WTC11 (cell line): ENCODE measurements at regions of chrX and their contacts with region 1.

Region 1: DNA sequence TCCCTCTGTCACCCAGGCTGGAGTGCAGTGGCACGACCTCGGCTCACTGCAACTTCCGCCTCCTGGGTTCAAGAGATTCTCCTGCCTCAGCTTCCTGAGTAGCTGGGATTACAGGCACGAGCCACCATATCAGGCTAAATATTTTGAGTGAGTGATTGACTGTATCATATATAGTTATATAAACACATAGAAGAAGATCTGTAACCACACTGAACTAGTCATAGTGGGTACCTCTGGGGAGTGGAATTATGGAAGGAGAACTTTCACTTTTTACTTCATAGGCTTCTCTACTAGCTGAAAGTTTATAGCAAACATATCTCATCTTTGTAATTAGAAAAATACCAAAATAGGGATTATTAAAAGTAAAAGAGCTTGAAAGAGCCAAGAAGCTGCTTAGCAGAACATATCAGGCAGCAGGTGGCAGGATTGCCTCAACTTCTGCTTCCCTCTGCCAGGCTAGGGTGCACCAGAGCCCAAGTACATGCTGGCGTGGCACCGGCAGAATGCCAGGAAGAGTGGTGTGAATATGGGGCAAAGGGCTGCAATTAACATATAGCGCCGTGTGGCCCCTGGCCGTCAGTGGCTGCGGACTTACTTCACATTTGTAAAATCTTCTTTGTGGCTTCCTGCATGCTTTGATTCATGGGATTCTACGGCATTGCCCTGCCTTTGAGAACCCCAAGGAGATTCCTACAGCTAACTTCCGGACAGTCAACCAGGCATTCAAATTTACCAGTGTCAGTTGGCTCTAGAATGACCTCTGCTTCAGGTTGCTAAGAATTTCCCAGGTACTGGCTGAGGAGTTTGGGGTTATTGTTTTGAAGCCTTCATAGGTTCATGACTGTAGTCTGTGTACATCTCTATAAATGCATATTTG is 39.4 kb upstream of the CD40LG start:
- DNase-seq: peak; percentile 42
- ATAC-seq: peak; percentile 52
- H3K4me3 Mint-ChIP-seq: no peak overlapping the region
- H3K27ac Mint-ChIP-seq: no peak overlapping the region
- H3K4me1 Mint-ChIP-seq: no peaks in the 10 kb centered on the region
- H3K27me3 Mint-ChIP-seq: no peaks in the 10 kb centered on the region; the same call in 1 of the 2 replicates
- CTCF ChIP-seq: no peak

Region 2: GRCh38 chrX:136353519-136354095 is 254.9 kb before region 1 on chrX:
- CTCF ChIA-PET with region 1: no interaction called
- POLR2A ChIA-PET with region 1: no interaction called
- DNase-seq: no peak
- ATAC-seq: no peak
- H3K4me3 Mint-ChIP-seq: no peak overlapping the region
- H3K27ac Mint-ChIP-seq: no peak overlapping the region
- H3K4me1 Mint-ChIP-seq: no peaks in the 10 kb centered on the region
- H3K27me3 Mint-ChIP-seq: no peaks in the 10 kb centered on the region
- CTCF ChIP-seq: no peak

Region 3: DNA sequence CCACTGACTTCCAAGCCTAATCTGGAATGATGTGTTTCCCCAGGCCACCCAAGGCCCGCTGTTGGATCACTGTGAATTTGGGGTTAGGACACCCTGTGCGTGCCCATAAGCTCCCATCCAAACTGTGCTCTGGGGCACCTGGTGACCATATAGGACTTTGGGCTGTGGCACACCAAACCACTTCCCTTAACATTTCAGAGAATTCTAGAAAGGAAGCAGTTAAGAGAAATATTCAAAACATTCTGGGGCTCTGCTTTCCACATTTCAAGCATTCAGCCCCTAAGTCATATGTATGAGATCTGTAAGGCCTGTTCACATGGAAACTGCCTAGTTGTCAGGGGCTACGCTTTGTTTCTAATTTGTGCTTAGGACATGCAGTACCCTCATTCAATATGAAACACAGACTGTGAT is 62.2 kb before region 1 on chrX:
- CTCF ChIA-PET with region 1: no interaction called
- POLR2A ChIA-PET with region 1: no interaction called
- DNase-seq: no peak
- ATAC-seq: no peak
- H3K4me3 Mint-ChIP-seq: no peak overlapping the region
- H3K27ac Mint-ChIP-seq: no peak overlapping the region
- H3K4me1 Mint-ChIP-seq: no peaks in the 10 kb centered on the region
- H3K27me3 Mint-ChIP-seq: no peaks in the 10 kb centered on the region
- CTCF ChIP-seq: no peak

Region 4: GRCh38 chrX:136588041-136588788 is 20.3 kb before region 1 on chrX:
- CTCF ChIA-PET with region 1: no interaction called
- POLR2A ChIA-PET with region 1: no interaction called
- DNase-seq: no peak
- ATAC-seq: no peak
- H3K4me3 Mint-ChIP-seq: no peak overlapping the region
- H3K27ac Mint-ChIP-seq: no peak overlapping the region
- H3K4me1 Mint-ChIP-seq: peaks cover 20% of the 10 kb centered on the region
- H3K27me3 Mint-ChIP-seq: no peaks in the 10 kb centered on the region
- CTCF ChIP-seq: no peak

Region 5: GRCh38 chrX:136694431-136695087 is 86.0 kb after region 1 on chrX:
- CTCF ChIA-PET with region 1: interaction called, 55 read pairs
- POLR2A ChIA-PET with region 1: no interaction called
- DNase-seq: no peak
- ATAC-seq: peak; percentile 77
- H3K4me3 Mint-ChIP-seq: no peak overlapping the region
- H3K27ac Mint-ChIP-seq: peak overlapping the region; percentile 91
- H3K4me1 Mint-ChIP-seq: peaks cover 8% of the 10 kb centered on the region
- H3K27me3 Mint-ChIP-seq: no peaks in the 10 kb centered on the region
- CTCF ChIP-seq: peak; percentile 47; the same call in 1 of the 2 replicates

Region 6: DNA sequence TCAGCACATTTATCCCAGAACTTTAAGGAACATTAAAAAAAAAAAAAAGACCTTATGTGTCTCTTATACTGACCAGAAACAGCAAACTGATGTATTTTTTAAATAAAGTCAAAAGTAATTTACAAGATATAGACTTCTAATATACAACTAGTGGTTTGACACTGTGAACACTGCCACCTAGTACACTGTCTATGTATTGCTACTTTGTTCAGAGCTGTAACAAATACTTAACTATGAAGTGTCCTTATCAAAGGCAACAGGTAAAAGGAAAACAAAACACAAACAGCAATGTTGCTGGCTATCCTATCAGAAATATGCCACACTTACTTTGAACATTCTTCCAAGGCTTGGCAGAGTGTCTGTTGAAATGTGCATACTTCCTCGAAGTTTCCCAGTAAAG is 99.8 kb after region 1 on chrX:
- CTCF ChIA-PET with region 1: interaction called, 10 read pairs
- POLR2A ChIA-PET with region 1: no interaction called
- DNase-seq: no peak
- ATAC-seq: no peak
- H3K4me3 Mint-ChIP-seq: no peak overlapping the region
- H3K27ac Mint-ChIP-seq: no peak overlapping the region
- H3K4me1 Mint-ChIP-seq: peaks cover 7% of the 10 kb centered on the region
- H3K27me3 Mint-ChIP-seq: no peaks in the 10 kb centered on the region
- CTCF ChIP-seq: no peak